ENCODE measurements at regions of chr20 and their contacts with region 1.

Region 1: DNA sequence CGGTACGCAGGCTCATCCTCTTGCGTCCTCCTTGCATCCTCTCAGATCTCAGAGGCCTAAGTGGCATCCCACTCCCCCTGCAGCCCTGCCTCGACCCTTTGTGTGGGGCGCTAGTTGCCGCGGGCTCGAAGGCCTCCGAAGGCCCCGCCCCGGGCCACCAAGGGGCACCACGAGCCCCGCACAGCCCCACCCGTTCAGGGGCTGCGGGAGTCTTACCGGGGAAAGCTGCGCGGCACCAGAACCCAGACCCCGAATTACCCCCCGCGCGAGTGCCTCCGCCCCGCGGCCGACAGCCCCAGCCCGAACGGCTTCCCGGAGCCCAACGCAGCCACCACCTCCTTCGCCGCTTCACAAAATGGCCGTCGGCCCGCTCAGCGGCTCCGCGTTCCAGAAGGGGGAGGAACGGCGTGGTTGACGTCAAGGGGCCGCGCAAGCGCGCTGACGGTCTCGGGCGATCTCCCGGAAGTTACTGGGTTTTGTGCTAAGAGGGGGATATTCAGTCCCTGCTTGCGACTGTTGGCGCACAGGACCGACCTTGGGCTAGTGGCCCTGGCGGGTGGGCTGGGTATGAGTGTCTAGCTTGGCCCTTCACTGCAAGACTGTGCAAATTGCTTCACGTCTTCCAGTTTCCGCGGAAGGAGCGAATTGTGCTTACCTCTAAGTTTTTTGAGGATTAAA is at the starts of genes CPNE1 and RBM12:
- DNase-seq: peak; percentile 94
- ATAC-seq: peak; percentile 75
- H3K4me3 Mint-ChIP-seq: peak within 1 kb of the TSS; percentile 93
- H3K27ac Mint-ChIP-seq: peak within 1 kb of the TSS; percentile 99
- H3K4me1 Mint-ChIP-seq: peaks cover 31% of the 10 kb centered on the region
- H3K27me3 Mint-ChIP-seq: no peaks in the 10 kb centered on the region
- CTCF ChIP-seq: no peak
- total RNA-seq, gene CPNE1: 308 to 324 TPM
- total RNA-seq, gene RBM12: 111 to 114 TPM

Region 2: GRCh38 chr20:35454881-35455609 is 209.6 kb before region 1 on chr20 and contains the start of gene CEP250:
- CTCF ChIA-PET with region 1: no interaction called
- POLR2A ChIA-PET with region 1: interaction called, 17 read pairs
- intact Hi-C with region 1: no loop called
- DNase-seq: peak; percentile 96
- ATAC-seq: peak; percentile 99
- H3K4me3 Mint-ChIP-seq: peak within 1 kb of the TSS; percentile 90
- H3K27ac Mint-ChIP-seq: peak within 1 kb of the TSS; percentile 99
- H3K4me1 Mint-ChIP-seq: peaks cover 21% of the 10 kb centered on the region
- H3K27me3 Mint-ChIP-seq: no peaks in the 10 kb centered on the region
- CTCF ChIP-seq: no peak
- total RNA-seq, gene CEP250: 56.0 to 60.3 TPM

Region 3: GRCh38 chr20:35635652-35636051 is 29.0 kb before region 1 on chr20:
- CTCF ChIA-PET with region 1: no interaction called
- POLR2A ChIA-PET with region 1: interaction called, 25 read pairs
- intact Hi-C with region 1: no loop called
- DNase-seq: no peak
- ATAC-seq: no peak
- H3K4me3 Mint-ChIP-seq: no peak overlapping the region
- H3K27ac Mint-ChIP-seq: peak overlapping the region; percentile 37
- H3K4me1 Mint-ChIP-seq: peaks cover 46% of the 10 kb centered on the region
- H3K27me3 Mint-ChIP-seq: no peaks in the 10 kb centered on the region
- CTCF ChIP-seq: no peak

Region 4: GRCh38 chr20:35680452-35681183 is 15.9 kb after region 1 on chr20:
- CTCF ChIA-PET with region 1: interaction called, 3 read pairs
- POLR2A ChIA-PET with region 1: interaction called, 20 read pairs
- intact Hi-C with region 1: no loop called
- DNase-seq: no peak
- ATAC-seq: no peak
- H3K4me3 Mint-ChIP-seq: no peak overlapping the region
- H3K27ac Mint-ChIP-seq: no peak overlapping the region
- H3K4me1 Mint-ChIP-seq: no peaks in the 10 kb centered on the region
- H3K27me3 Mint-ChIP-seq: no peaks in the 10 kb centered on the region
- CTCF ChIP-seq: no peak

Region 5: GRCh38 chr20:35711588-35712209 is 47.0 kb after region 1 on chr20:
- CTCF ChIA-PET with region 1: no interaction called
- POLR2A ChIA-PET with region 1: interaction called, 10 read pairs
- intact Hi-C with region 1: no loop called
- DNase-seq: no peak
- ATAC-seq: peak; percentile 76
- H3K4me3 Mint-ChIP-seq: peak overlapping the region; percentile 44
- H3K27ac Mint-ChIP-seq: peak overlapping the region; percentile 90
- H3K4me1 Mint-ChIP-seq: peaks cover 63% of the 10 kb centered on the region
- H3K27me3 Mint-ChIP-seq: no peaks in the 10 kb centered on the region
- CTCF ChIP-seq: no peak

Region 6: DNA sequence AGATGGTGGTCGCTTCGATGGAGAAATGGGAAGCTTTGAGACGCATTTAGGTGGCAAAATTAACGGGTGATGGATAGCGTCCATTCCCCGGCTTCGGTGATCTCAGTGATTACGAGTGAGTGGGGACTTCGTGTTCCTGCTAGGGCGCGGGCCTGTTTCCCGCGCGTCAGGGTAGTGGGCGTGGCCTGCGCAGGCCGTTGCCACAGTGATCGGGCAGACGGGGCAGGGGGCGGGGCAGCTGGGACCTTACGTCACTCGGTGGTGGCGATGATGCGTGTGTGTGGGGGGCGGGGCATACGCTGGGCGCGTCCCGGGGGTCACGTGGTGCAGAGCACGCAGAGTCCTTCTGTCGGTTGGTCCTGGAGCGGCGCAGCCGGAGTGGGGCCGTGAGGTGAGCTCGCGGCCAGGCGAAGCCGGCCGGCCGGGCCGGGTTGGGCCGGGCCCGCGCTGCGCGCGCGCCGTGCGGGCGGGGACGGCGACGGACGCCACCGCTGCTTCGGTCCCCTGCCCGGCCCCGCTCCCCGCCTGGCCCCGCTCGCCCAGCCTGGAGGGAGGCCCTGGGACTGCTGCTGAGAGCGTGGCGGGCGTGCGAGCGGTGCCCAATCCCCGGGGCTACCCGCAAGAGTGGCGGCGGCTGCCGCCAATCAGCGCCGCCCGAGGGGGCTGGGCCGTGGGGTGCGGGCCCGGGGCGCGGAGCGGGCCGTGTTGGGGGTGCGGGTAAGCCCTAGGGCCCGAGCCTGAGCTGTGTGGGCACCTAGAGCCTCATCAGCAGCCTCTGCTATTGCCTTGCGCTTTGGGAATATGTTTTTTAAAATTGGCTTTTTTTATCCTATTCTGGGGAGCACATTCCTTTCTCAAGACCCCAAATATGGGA is 107.2 kb after region 1 on chr20 and contains the start of gene PHF20:
- CTCF ChIA-PET with region 1: no interaction called
- POLR2A ChIA-PET with region 1: interaction called, 15 read pairs
- intact Hi-C with region 1: no loop called
- DNase-seq: peak; percentile 100
- ATAC-seq: peak; percentile 89
- H3K4me3 Mint-ChIP-seq: peak within 1 kb of the TSS; percentile 79
- H3K27ac Mint-ChIP-seq: peak within 1 kb of the TSS; percentile 90
- H3K4me1 Mint-ChIP-seq: peaks cover 68% of the 10 kb centered on the region
- H3K27me3 Mint-ChIP-seq: no peaks in the 10 kb centered on the region
- CTCF ChIP-seq: no peak
- total RNA-seq, gene PHF20: 57.9 to 58.8 TPM

Measured in activated CD8-positive, alpha-beta T cell treated with anti-CD3 and anti-CD28 coated beads for 36 hours (primary cell).